Dorsolateral prefrontal cortex (tissue), 120 donors: ENCODE measurements at regions of chr7 and their contacts with region 1.

Region 1: GRCh38 chr7:68684246-68684839 is 913.9 kb upstream of the AUTS2 start:
- DNase-seq: peak in 6 of 10 donors; percentile 20 to 58 (median 44)
- H3K4me3 ChIP-seq: peak overlapping the region in 2 of 59 donors; percentile 16 to 21
- H3K27ac ChIP-seq: peak overlapping the region in 2 of 59 donors; percentile 18 to 45
- H3K27me3 ChIP-seq: peaks cover 0 to 31% (median 0%) of the 10 kb centered on the region in 45 donors
- CTCF ChIP-seq: peak in 4 of 56 donors; percentile 6 to 17 (median 12)

Region 2: DNA sequence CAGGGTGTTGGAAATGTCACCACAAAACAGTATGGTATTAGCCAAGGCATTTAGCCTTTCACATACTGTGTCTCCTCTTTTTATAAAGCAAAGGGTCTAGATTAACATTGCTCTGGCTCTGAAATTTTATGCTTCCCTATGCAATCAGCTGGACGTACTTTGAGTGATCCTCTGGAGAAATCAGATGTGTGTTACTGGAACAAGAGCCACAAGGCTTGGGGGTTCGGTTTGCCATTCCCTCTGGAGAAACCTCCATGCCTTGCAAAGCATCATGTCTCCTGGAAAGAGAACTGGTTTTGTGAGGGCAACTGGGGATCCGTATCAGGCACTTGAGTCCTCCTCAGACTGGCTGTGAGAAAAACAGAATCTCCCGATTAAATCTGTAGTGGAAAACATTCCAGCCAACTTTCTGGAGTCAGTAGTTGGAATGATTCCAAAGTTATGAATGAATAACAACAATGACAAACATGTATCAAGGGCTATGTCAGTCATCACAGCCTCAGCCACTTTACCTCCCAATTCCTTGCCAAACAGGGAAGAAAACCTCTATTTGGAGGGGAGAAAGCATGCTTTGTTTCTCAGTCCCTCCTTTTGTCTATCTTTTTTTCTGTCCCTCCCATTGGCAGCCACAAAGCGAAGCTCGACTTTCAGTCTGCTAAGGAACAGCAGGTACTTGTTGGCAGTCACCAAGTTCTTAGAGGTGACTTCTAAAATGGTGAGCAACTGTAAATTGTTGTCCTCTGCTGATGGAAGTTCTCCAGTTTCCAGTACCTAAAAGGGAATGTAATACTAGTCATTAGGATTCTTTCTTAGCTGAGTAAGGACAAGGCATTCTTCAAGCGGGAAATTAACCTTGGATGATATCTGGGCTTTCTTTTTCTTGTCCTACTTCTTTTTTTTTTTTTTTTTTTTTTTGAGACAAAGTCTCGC is 49.1 kb after region 1 on chr7:
- intact Hi-C with region 1: no loop called
- DNase-seq: no peak
- H3K4me3 ChIP-seq: no peak overlapping the region
- H3K27ac ChIP-seq: no peak overlapping the region
- H3K27me3 ChIP-seq: peaks cover 0 to 17% (median 0%) of the 10 kb centered on the region in 45 donors
- CTCF ChIP-seq: no peak

Region 3: DNA sequence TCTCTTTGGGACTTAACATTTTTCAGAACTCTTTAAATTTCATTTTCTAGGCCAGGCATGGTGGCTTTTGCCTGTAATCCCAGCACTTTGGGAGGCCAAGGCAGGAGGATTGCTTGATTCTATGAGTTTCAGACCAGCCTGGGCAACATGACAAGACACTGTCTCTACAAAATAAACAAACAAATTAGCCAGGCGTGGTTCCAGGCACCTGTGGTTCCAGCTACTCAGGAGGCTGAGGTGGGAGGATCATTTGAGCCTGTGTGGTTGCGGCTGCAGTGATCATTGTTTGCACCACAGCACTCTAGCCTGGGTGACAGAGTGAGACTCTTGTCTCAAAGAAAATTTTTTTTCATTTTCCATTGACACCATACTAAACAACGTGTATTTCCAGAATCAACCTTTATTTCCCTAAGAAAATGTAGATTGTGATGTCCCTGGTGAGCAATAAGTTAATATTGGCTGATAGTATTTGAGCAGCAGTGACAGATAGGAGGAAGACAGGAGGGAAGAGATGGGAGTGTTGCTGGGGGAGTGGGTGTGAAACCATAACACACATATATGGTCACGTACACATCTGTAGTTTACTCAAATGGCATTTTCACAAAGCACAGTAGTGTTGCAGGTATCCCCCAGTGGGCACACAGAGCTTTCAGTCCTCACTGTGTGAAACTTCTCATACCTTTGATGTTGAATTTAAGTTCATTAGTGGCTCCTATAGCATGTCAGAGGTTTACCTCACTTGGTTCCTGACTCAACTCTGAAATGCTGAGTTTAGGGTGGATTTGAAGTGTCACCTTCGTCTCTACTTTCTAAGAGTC is 1119.6 kb after region 1 on chr7:
- intact Hi-C with region 1: loop called in 1 of 2 experiments (anchors 10 kb)
- DNase-seq: no peak
- H3K4me3 ChIP-seq: no peak overlapping the region
- H3K27ac ChIP-seq: no peak overlapping the region
- H3K27me3 ChIP-seq: no peaks in the 10 kb centered on the region
- CTCF ChIP-seq: no peak

Region 4: GRCh38 chr7:69932034-69932628 is 1247.8 kb after region 1 on chr7:
- intact Hi-C with region 1: loop called in 1 of 2 experiments (anchors 10 kb)
- DNase-seq: peak in 7 of 10 donors; percentile 36 to 69 (median 48)
- H3K4me3 ChIP-seq: no peak overlapping the region
- H3K27ac ChIP-seq: no peak overlapping the region
- H3K27me3 ChIP-seq: no peaks in the 10 kb centered on the region
- CTCF ChIP-seq: peak; percentile 31 to 83 (median 71)